H1 (cell line): ENCODE measurements at regions of chr5 and their contacts with region 1.

Region 1: GRCh38 chr5:1167728-1168709 is 33.4 kb upstream of the SLC6A19 start:
- DNase-seq: peak in 1 of 2 experiments; percentile 82
- H3K4me3 ChIP-seq: peak overlapping the region in 2 of 4 experiments; percentile 15 to 46; a peak in 2 of 8 replicates
- H3K27ac ChIP-seq: no peak overlapping the region
- H3K4me1 ChIP-seq: peaks cover 0 to 5% (median 2%) of the 10 kb centered on the region in 4 experiments; a peak in 2 of 7 replicates
- H3K27me3 ChIP-seq: no peaks in the 10 kb centered on the region; a peak in 1 of 7 replicates
- CTCF ChIP-seq: peak in 2 of 3 experiments; percentile 92 to 94; a peak in 3 of 4 replicates
- EP300 ChIP-seq: no peak
- POLR2A ChIP-seq: no peak
- RAD21 ChIP-seq: peak; percentile 93 to 96

Region 2: DNA sequence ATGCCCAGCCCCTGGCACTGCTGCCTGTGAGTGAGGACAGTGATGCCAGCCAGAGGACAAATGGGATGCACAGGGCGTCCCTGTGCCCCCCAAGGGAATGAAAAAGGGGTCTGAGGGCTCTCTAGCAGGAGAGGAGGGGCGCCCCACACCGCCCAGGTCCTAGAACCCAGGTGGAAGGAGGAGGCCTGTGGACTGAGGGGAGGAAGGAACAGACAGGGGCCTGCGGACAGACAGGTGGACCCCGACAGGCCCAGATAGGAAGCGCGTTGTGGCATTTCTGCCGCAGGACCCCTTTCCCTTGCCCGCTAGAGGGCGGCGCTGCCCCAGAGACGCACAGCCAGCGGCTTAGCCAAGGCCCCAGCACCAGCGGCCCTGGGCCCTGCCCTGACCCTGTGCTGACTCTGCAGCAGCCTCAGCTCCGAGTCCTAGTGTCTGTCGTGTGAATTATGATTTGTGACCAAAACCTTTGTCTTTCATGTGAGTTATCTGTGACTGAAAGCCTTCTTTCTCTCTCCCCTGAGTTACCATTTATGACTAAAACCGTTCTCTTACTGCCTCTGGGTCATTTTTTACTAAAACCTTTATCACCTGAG is 244.6 kb before region 1 on chr5:
- CTCF ChIA-PET with region 1: interaction called, 40 read pairs
- POLR2A ChIA-PET with region 1: no interaction called
- DNase-seq: peak; percentile 60 to 91
- H3K4me3 ChIP-seq: no peak overlapping the region
- H3K27ac ChIP-seq: no peak overlapping the region
- H3K4me1 ChIP-seq: peaks cover 0 to 4% (median 3%) of the 10 kb centered on the region in 4 experiments; a peak in 3 of 7 replicates
- H3K27me3 ChIP-seq: peaks cover 3 to 20% (median 16%) of the 10 kb centered on the region in 4 experiments
- CTCF ChIP-seq: peak; percentile 94 to 98 (median 96)
- EP300 ChIP-seq: no peak
- POLR2A ChIP-seq: no peak
- RAD21 ChIP-seq: peak; percentile 97

Region 3: DNA sequence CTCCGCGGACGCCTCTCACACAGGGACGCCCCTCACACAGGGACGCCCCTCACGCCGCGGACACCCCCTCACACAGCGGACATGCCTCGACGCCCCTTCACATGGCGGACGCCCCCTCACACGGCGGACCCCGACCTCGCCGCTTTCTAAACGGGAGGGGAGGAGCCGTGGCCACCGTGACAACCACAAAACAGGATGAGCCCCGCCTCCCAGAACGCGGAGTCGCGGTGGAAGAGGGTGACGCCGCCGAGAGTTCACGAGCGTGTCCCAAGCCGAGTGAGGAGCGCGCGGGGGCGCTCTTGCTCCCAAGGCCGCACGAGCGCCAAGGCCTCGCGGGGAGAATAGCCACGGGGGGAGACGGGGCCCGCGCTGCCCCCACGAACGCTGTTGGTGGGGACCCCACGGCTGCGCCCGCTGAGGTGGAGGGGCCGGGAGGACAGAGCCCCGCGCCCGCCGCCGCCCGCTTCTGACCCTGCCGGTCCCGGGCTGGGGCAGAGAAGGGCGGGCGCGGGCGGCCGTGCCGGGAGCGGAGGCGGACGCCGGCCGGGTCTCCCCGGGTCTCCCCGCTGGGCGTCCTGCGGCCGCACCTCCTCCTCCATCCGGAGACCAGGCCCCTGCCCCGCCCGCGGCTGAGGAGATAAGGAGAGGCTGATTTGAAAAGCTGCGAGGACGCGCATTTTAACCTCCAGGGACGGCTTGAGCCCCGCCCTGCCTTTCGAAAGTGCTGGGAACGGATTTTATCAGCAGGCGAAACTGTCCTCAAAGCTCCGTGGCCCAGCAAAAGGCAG is 163.4 kb before region 1 on chr5:
- CTCF ChIA-PET with region 1: interaction called, 32 read pairs
- POLR2A ChIA-PET with region 1: no interaction called
- DNase-seq: peak in 1 of 2 experiments; percentile 73
- H3K4me3 ChIP-seq: peak overlapping the region; percentile 26 to 69 (median 36)
- H3K27ac ChIP-seq: no peak overlapping the region
- H3K4me1 ChIP-seq: peaks cover 0 to 13% (median 3%) of the 10 kb centered on the region in 4 experiments; a peak in 4 of 7 replicates
- H3K27me3 ChIP-seq: peaks cover 18 to 56% (median 52%) of the 10 kb centered on the region in 4 experiments
- CTCF ChIP-seq: no peak; a peak in 1 of 4 replicates
- EP300 ChIP-seq: no peak
- POLR2A ChIP-seq: no peak
- RAD21 ChIP-seq: no peak

Region 4: DNA sequence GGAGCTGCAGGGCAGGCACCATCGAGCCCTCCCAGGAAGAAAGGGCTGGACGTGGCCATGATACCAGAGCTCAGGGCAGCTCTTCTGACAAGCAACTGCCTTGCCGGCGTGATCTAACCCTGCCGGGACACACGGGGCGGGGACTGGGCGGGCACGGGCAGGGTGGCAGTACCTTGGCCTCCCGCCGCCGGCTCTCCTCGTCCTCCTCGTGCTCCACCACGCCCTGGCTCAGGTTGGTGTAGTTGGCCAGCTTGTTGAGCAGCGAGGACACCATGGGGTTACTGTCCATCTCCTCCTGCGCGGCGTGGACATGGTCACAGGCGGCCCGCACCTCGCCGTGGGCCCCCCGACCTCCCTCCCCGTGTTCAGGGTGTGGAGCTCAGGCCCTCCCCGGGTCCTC is 74.7 kb before region 1 on chr5:
- CTCF ChIA-PET with region 1: interaction called, 19 read pairs
- POLR2A ChIA-PET with region 1: no interaction called
- DNase-seq: no peak
- H3K4me3 ChIP-seq: no peak overlapping the region
- H3K27ac ChIP-seq: no peak overlapping the region; the same call in 1 of the 2 replicates
- H3K4me1 ChIP-seq: peaks cover 5 to 28% (median 9%) of the 10 kb centered on the region in 4 experiments
- H3K27me3 ChIP-seq: no peaks in the 10 kb centered on the region
- CTCF ChIP-seq: no peak
- EP300 ChIP-seq: no peak
- POLR2A ChIP-seq: no peak
- RAD21 ChIP-seq: no peak

Region 5: GRCh38 chr5:1125030-1125357 is 43.0 kb before region 1 on chr5:
- CTCF ChIA-PET with region 1: interaction called, 17 read pairs
- POLR2A ChIA-PET with region 1: no interaction called
- DNase-seq: no peak
- H3K4me3 ChIP-seq: no peak overlapping the region
- H3K27ac ChIP-seq: no peak overlapping the region
- H3K4me1 ChIP-seq: no peaks in the 10 kb centered on the region; a peak in 1 of 7 replicates
- H3K27me3 ChIP-seq: no peaks in the 10 kb centered on the region
- CTCF ChIP-seq: no peak
- EP300 ChIP-seq: no peak
- POLR2A ChIP-seq: no peak
- RAD21 ChIP-seq: no peak

Region 6: GRCh38 chr5:1182633-1183423 is 14.8 kb after region 1 on chr5:
- CTCF ChIA-PET with region 1: interaction called, 30 read pairs
- POLR2A ChIA-PET with region 1: no interaction called
- DNase-seq: no peak
- H3K4me3 ChIP-seq: no peak overlapping the region
- H3K27ac ChIP-seq: no peak overlapping the region
- H3K4me1 ChIP-seq: peaks cover 0 to 3% (median 0%) of the 10 kb centered on the region in 4 experiments; a peak in 1 of 7 replicates
- H3K27me3 ChIP-seq: no peaks in the 10 kb centered on the region
- CTCF ChIP-seq: no peak
- EP300 ChIP-seq: no peak
- POLR2A ChIP-seq: no peak
- RAD21 ChIP-seq: no peak

Region 7: DNA sequence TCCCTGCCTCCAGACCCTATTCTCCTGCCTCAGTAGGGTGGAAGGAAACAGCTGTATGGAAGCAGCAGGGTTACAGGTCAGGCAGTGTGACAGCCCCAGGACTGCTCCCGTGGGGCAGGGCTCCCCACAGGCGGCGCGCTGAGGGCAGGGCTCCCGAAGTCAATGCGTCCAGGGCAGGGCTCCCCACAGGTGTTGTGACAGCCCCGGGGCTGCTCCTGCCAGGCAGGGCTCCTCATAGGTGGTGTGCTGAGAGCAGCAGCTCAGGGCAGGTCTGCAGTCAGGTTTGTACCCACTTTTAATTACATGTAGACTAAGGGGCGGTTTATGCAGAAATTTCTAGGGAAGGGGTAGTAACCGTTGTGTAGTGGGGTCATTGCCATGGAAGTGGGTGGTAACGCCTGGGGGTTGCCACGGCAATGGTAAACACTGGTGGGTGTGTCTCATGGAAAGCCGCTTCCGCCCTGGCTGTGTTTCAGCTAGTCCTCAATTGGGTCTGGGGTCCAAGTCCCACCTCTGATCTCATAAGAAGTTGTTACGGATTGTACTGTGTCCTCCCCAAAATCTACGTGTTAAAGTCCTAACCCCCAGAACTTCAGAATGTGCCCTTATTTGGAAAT is 143.5 kb after region 1 on chr5:
- CTCF ChIA-PET with region 1: no interaction called
- POLR2A ChIA-PET with region 1: no interaction called
- DNase-seq: no peak
- H3K4me3 ChIP-seq: no peak overlapping the region
- H3K27ac ChIP-seq: no peak overlapping the region
- H3K4me1 ChIP-seq: peaks cover 10 to 16% (median 13%) of the 10 kb centered on the region in 4 experiments
- H3K27me3 ChIP-seq: no peaks in the 10 kb centered on the region
- CTCF ChIP-seq: no peak
- EP300 ChIP-seq: no peak
- POLR2A ChIP-seq: no peak
- RAD21 ChIP-seq: no peak

Region 8: DNA sequence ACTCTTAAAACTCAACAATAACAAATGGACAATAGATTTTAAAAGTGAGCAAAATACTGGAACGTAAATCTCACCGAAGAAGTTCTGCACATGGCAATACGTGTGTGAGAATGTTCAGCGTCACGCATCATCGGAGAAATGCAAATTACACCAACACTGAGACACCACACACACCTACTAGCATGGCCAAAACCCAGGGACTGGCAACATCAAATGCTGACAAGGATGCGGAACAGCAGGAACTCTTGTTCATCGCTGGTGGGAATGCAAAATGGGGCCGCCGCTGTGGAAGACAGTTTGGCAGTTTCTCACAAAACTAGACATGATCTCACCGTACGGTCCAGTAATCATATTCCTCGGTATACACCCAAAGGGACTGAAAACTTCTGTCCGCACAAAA is 198.5 kb after region 1 on chr5:
- CTCF ChIA-PET with region 1: no interaction called
- POLR2A ChIA-PET with region 1: no interaction called
- DNase-seq: no peak
- H3K4me3 ChIP-seq: no peak overlapping the region
- H3K27ac ChIP-seq: no peak overlapping the region
- H3K4me1 ChIP-seq: peaks cover 0 to 3% (median 1%) of the 10 kb centered on the region in 4 experiments; a peak in 1 of 7 replicates
- H3K27me3 ChIP-seq: no peaks in the 10 kb centered on the region
- CTCF ChIP-seq: no peak
- EP300 ChIP-seq: no peak
- POLR2A ChIP-seq: no peak
- RAD21 ChIP-seq: no peak